ENCODE measurements at regions of chrX and their contacts with region 1.

Region 1: DNA sequence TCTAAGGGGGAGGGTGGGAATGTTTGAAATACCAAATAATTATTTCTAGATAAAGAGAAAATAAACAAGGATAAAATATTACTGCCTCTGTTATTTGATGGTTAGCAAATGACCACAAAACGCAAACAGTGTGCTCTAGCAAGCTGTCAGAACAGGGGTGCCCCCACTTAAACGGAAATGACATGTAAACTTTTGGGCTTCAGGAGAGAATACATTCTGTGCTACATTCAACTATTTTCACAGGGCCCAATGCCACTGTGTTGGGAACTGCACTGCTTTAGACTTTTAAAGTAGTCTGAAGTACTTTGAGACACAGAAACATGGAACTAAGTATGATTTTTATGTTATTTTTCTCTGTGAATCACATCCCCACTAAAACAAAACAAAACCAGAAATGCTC is 14.1 kb downstream of the CD40LG start:
- DNase-seq: no peak
- H3K4me3 Mint-ChIP-seq: peak overlapping the region; percentile 23
- H3K27ac Mint-ChIP-seq: peak overlapping the region; percentile 83
- H3K4me1 Mint-ChIP-seq: peaks cover 88% of the 10 kb centered on the region
- H3K27me3 Mint-ChIP-seq: no peaks in the 10 kb centered on the region

Region 2: DNA sequence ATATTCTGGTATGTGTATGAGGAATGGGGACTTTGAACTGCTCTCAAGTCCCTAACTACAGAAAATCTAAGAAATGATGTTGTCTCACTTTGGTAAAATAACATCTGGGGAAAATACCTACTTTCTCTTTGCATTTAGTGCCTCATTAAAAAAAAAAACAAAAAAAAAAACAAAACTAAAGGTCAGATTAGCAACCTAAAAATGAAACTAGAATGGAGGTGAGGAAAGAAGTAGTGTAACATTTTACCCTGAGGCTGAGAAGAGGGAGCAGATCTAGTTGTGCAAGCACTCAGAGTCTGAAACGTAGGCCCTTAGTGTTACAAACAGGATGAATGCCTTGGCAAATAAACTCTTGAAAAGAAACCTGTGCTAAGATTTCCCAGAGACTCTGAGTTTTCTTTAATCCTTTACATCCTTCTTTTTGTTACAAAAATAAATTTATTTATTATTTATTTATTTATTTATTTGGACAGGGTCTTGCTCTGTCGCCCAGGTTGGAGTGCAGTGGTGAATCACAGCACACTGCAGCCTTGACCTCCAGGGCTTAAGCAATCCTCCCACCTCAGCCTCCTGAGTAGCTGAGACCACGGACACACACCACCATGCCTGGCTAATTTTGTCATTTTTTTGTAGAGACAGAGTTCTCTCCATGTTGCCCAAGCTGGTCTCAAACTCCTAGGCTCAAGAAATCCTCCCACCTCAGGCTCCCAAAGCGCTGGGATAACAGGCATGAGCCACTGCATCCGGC is 73.9 kb before region 1 on chrX:
- CTCF ChIA-PET with region 1: no interaction called
- POLR2A ChIA-PET with region 1: no interaction called
- intact Hi-C with region 1: no loop called
- DNase-seq: no peak
- H3K4me3 Mint-ChIP-seq: peak overlapping the region; percentile 12
- H3K27ac Mint-ChIP-seq: peak overlapping the region; percentile 74
- H3K4me1 Mint-ChIP-seq: peaks cover 66% of the 10 kb centered on the region
- H3K27me3 Mint-ChIP-seq: no peaks in the 10 kb centered on the region

Region 3: GRCh38 chrX:136626237-136626636 is 35.9 kb before region 1 on chrX:
- CTCF ChIA-PET with region 1: no interaction called
- POLR2A ChIA-PET with region 1: interaction called, 11 read pairs
- intact Hi-C with region 1: no loop called
- DNase-seq: no peak
- H3K4me3 Mint-ChIP-seq: no peak overlapping the region
- H3K27ac Mint-ChIP-seq: peak overlapping the region; percentile 82
- H3K4me1 Mint-ChIP-seq: peaks cover 89% of the 10 kb centered on the region
- H3K27me3 Mint-ChIP-seq: no peaks in the 10 kb centered on the region

Region 4: DNA sequence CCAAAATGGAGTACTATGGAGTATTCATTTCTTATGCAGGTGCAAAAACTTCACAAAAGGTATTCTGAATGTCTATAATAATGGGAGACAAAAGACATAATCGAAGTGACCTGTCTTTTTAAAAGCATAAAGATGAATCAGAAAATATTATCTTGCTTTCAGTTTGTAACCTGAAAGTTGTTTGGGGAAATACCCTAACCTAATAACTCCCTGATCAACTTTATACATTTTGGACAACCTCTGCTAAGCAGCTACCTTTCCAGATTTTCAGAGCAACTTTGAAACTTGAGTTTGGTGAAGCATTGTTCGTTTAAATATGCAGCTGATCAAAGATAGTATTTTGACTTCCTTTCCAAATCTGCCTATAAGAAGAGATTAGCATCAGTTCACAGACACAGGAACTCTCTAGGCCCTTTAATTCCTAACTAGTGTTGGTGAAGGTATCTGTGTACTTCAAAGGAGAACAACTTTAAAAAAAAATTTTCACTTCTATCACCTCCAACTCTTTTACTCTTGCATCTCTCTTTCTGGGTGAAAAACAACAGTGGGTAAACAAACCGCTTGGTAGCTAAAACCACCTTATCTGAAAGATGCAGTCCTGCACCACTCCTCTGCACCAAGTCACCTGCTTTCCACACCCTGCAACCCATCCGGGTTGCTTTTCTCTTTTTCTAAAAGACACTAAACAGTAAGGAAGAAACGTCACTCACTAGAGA is 12.3 kb after region 1 on chrX:
- CTCF ChIA-PET with region 1: interaction called, 5 read pairs
- POLR2A ChIA-PET with region 1: interaction called, 6 read pairs
- intact Hi-C with region 1: loop called (anchors 1 kb)
- DNase-seq: no peak
- H3K4me3 Mint-ChIP-seq: peak overlapping the region; percentile 55
- H3K27ac Mint-ChIP-seq: peak overlapping the region; percentile 73
- H3K4me1 Mint-ChIP-seq: peaks cover 90% of the 10 kb centered on the region
- H3K27me3 Mint-ChIP-seq: no peaks in the 10 kb centered on the region

Region 5: DNA sequence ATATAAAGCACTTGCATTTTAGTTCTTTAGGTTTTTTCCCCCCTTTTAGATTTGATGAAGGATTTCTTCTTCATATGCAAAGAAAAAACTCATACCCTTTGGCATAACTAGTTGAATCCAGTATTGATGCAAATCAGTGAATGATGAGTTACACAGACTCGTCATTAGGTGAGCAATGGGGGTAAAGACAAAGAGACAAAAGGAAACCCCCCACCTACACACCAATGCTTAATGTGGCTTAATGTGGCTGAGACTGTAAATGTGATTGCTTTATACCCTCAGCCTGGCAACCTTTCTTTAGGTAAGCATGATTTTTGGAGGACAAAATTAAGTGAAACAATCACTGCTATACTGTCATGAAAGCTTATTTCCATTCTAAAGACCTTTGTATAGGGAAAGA is 25.4 kb after region 1 on chrX:
- CTCF ChIA-PET with region 1: no interaction called
- POLR2A ChIA-PET with region 1: interaction called, 3 read pairs
- intact Hi-C with region 1: loop called (anchors 1 kb)
- DNase-seq: peak; percentile 48
- H3K4me3 Mint-ChIP-seq: peak overlapping the region; percentile 17
- H3K27ac Mint-ChIP-seq: peak overlapping the region; percentile 83
- H3K4me1 Mint-ChIP-seq: peaks cover 53% of the 10 kb centered on the region
- H3K27me3 Mint-ChIP-seq: no peaks in the 10 kb centered on the region

Region 6: GRCh38 chrX:136694431-136695087 is 32.5 kb after region 1 on chrX:
- CTCF ChIA-PET with region 1: interaction called, 14 read pairs
- POLR2A ChIA-PET with region 1: interaction called, 8 read pairs
- intact Hi-C with region 1: loop called (anchors 2 kb)
- DNase-seq: no peak
- H3K4me3 Mint-ChIP-seq: peak overlapping the region; percentile 77
- H3K27ac Mint-ChIP-seq: peak overlapping the region; percentile 97
- H3K4me1 Mint-ChIP-seq: peaks cover 75% of the 10 kb centered on the region
- H3K27me3 Mint-ChIP-seq: no peaks in the 10 kb centered on the region

Region 7: DNA sequence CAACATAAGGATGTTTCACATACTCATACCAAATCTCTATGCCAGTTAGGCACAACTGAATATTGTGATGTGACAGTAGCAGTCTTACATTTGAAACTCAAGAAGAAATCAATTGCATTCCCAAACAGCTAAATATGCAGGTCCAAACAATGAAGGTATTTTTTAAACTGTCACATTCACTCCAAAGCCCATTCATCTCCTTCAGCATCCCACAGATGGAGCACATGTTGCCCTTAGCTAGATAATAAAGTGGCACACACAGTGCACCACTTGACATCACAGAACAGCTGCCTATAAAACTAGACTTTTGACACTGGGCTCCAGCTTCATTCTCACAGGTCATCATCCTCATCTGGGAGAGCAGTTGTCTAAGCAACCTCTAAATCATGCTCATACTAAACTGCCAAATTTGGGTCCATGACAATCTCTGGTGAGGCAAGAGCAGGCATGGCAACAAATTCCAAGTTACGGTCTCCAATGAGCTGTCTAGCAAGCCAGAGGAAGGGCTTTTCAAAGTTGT is 144.8 kb after region 1 on chrX:
- CTCF ChIA-PET with region 1: no interaction called
- POLR2A ChIA-PET with region 1: no interaction called
- intact Hi-C with region 1: no loop called
- DNase-seq: no peak
- H3K4me3 Mint-ChIP-seq: no peak overlapping the region
- H3K27ac Mint-ChIP-seq: no peak overlapping the region
- H3K4me1 Mint-ChIP-seq: peaks cover 8% of the 10 kb centered on the region
- H3K27me3 Mint-ChIP-seq: no peaks in the 10 kb centered on the region

Measured in activated CD4-positive, alpha-beta memory T cell treated with anti-CD3 and anti-CD28 coated beads for 36 hours (primary cell).